A549 (cell line): ENCODE measurements at regions of chr17 and their contacts with region 1.

Region 1: DNA sequence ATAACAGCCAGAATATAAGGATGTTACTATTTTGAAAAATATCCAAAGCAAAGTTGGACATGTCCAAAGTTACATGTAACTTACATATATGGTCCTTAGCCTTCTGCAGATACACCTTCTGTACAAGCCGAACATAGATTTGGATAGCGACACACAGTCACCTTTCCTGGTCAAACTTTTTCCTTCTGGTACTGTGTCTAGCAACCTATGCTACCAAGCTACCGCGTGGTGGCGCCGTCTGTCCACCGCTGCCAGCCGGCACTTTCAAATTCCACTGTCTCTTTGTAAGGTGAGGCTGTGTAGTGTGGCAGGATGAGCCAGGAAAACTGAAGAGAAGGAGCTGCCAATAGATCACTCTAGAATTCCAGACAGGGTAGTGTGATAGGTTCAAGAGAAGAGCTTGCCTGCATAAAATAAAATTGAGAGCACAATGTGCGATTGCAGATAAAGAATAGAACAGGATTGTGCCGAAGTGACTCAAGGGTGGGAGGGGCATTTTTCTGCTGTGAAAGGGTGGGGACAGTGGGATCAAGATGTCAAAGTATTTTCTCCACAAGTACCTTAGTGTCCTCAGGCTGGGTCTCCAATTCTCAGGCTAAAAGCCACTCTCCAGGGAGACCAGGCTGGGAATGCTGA is 366.9 kb downstream of the SLC39A11 start:
- DNase-seq: peak; percentile 72 to 83
- ATAC-seq: peak; percentile 85 to 86
- H3K4me3 ChIP-seq: no peak overlapping the region
- H3K27ac ChIP-seq: peak overlapping the region; percentile 11 to 61; a peak in 3 of 6 replicates
- H3K4me1 ChIP-seq: peaks cover 20% of the 10 kb centered on the region
- CTCF ChIP-seq: peak; percentile 97
- EP300 ChIP-seq: no peak
- POLR2A ChIP-seq: no peak
- RAD21 ChIP-seq: peak; percentile 95 to 96

Region 2: GRCh38 chr17:72306037-72306436 is 419.5 kb before region 1 on chr17:
- CTCF ChIA-PET with region 1: no interaction called
- POLR2A ChIA-PET with region 1: no interaction called
- DNase-seq: no peak
- ATAC-seq: no peak; a peak in 1 of 6 replicates
- H3K4me3 ChIP-seq: no peak overlapping the region
- H3K27ac ChIP-seq: no peak overlapping the region
- H3K4me1 ChIP-seq: peaks cover 16% of the 10 kb centered on the region; the same call in 2 of the 3 replicates
- CTCF ChIP-seq: no peak
- EP300 ChIP-seq: no peak
- POLR2A ChIP-seq: no peak
- RAD21 ChIP-seq: no peak

Region 3: DNA sequence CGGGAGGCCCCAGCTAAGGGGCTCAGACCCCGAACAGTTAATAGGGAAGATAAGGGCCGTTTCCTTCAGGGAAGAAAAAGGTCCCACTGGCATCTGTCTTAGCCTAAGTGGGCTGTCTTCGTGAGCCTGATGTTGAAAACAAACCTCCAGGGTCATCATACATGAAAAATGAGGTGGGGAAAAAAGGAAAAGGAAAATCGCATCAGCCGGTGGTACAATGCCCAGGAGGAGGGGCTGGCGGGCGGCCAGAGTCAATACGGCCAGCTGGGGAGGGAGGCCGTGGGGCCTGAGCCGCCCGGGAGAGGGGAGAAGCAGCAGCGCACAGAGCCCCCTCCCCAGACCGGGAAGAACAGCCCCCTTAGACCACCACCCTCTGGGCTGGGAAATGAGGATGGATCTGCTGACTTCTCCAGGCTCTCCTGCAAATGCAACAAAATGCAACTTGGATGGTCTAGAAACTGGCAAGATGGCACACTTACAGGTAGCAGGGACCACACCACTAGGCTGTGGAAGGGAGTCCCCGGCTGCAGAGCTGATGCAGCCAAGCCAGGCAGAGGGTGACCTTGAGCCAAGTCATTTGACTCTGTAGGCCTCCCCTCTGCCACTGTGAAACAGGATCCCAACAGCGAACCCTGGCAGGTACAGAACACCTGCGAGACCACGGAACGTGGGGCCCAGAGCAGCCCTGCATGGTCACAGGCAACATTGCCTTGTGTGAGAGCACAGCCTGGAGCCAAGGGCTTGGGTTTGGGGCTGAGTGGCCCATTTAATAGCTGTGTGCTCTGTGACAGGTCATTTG is 156.2 kb before region 1 on chr17:
- CTCF ChIA-PET with region 1: interaction called, 578 read pairs
- POLR2A ChIA-PET with region 1: no interaction called
- DNase-seq: no peak
- ATAC-seq: no peak
- H3K4me3 ChIP-seq: no peak overlapping the region
- H3K27ac ChIP-seq: peak overlapping the region in 1 of 2 experiments; percentile 7; a peak in 2 of 6 replicates
- H3K4me1 ChIP-seq: peaks cover 61% of the 10 kb centered on the region
- CTCF ChIP-seq: no peak
- EP300 ChIP-seq: no peak
- POLR2A ChIP-seq: no peak
- RAD21 ChIP-seq: no peak

Region 4: GRCh38 chr17:72609501-72609900 is 116.0 kb before region 1 on chr17:
- CTCF ChIA-PET with region 1: interaction called, 46 read pairs
- POLR2A ChIA-PET with region 1: no interaction called
- DNase-seq: peak; percentile 64 to 80
- ATAC-seq: peak in 1 of 2 experiments; percentile 46; a peak in 4 of 6 replicates
- H3K4me3 ChIP-seq: no peak overlapping the region
- H3K27ac ChIP-seq: peak overlapping the region; percentile 82 to 89
- H3K4me1 ChIP-seq: peaks cover 64% of the 10 kb centered on the region
- CTCF ChIP-seq: no peak
- EP300 ChIP-seq: peak in 1 of 2 experiments; percentile 24; a peak in 1 of 5 replicates
- POLR2A ChIP-seq: no peak
- RAD21 ChIP-seq: no peak; a peak in 1 of 5 replicates

Region 5: DNA sequence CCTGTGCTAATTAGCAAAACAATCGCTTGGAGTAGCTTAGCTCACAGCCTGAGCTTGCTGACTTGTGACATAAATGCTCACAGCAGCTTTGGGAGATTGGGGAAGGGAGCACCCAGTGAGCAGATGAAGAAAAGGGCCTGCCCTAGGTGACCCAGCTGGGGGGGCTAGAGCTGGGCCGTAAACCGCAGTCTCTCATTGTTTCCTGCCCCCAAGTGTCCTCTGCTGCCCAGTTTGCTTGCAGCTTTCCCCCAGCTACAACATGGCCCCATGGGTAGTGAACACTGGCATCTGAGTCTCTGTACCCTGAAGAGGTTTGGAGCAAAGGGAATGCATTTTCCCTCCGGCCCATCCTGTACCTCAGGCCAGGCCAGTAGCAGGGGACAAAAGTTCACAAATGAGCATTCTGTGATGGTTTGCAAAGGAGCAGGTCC is 17.5 kb after region 1 on chr17:
- CTCF ChIA-PET with region 1: interaction called, 61 read pairs
- POLR2A ChIA-PET with region 1: no interaction called
- DNase-seq: no peak
- ATAC-seq: peak in 1 of 2 experiments; percentile 25; a peak in 1 of 6 replicates
- H3K4me3 ChIP-seq: no peak overlapping the region
- H3K27ac ChIP-seq: no peak overlapping the region
- H3K4me1 ChIP-seq: no peaks in the 10 kb centered on the region
- CTCF ChIP-seq: no peak
- EP300 ChIP-seq: no peak
- POLR2A ChIP-seq: no peak
- RAD21 ChIP-seq: no peak

Region 6: GRCh38 chr17:73166731-73167581 is 441.4 kb after region 1 on chr17:
- CTCF ChIA-PET with region 1: interaction called, 205 read pairs
- POLR2A ChIA-PET with region 1: no interaction called
- DNase-seq: no peak
- ATAC-seq: no peak
- H3K4me3 ChIP-seq: peak overlapping the region; percentile 56; the same call in 2 of the 3 replicates
- H3K27ac ChIP-seq: no peak overlapping the region
- H3K4me1 ChIP-seq: peaks cover 27% of the 10 kb centered on the region
- CTCF ChIP-seq: no peak
- EP300 ChIP-seq: no peak
- POLR2A ChIP-seq: no peak
- RAD21 ChIP-seq: no peak

Region 7: GRCh38 chr17:73231841-73232586 is 506.5 kb after region 1 on chr17:
- CTCF ChIA-PET with region 1: interaction called, 17 read pairs
- POLR2A ChIA-PET with region 1: no interaction called
- DNase-seq: peak; percentile 94 to 95
- ATAC-seq: peak; percentile 84 to 95
- H3K4me3 ChIP-seq: peak overlapping the region; percentile 88
- H3K27ac ChIP-seq: peak overlapping the region; percentile 89 to 95
- H3K4me1 ChIP-seq: peaks cover 44% of the 10 kb centered on the region
- CTCF ChIP-seq: no peak
- EP300 ChIP-seq: no peak
- POLR2A ChIP-seq: peak; percentile 88
- RAD21 ChIP-seq: peak in 1 of 2 experiments; percentile 1; a peak in 1 of 5 replicates